ENCODE measurements at regions of chr5 and their contacts with region 1.

Region 1: DNA sequence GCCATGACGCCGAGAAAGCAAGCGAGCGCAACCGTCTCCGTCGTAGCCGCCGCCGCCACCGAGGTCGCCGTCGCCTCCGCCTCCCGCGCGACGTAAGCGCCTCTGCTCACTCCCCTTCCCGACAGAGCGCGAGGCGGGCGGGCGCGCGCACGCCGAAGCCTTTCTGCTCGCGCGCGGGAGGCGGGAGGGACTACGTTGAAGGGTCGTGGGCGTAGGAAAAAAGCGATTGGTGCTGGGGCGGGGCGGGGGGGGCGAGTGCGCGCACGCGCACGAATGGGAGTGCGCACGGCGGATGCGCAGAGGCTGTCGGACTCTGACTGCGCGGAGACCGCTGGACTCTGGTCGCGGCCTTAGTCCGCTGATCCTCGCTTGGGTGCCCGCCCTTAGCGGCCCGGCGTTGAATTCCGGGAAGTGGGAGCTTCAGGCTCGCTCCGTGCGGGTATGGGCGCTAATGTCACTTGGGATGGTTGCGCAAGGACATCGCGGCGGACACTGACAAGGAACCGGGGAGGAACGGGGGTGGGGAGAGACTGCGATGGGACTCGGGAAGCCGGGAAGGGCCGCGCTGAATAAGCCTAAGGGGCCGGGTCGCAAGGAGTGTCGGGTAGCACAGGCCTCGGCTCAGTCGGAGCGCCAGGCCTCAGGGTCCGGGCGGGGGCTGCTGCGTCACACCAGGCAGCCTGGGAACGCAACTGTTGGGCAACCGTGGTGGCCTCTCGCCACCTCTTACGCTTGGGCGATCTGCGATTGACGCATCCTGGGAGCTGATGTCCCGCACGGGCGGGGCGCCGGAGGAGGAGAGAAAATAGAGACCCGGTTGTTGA is at the start of gene CHD1:
- DNase-seq: peak; percentile 94 to 99 (median 98)
- H3K4me3 ChIP-seq: peak within 1 kb of the TSS; percentile 48 to 84
- H3K4me3 Mint-ChIP-seq: peak within 1 kb of the TSS; percentile 93 to 99 (median 98)
- H3K27ac ChIP-seq: peak within 1 kb of the TSS; percentile 100
- H3K27ac Mint-ChIP-seq: peak within 1 kb of the TSS; percentile 99 to 100 (median 100)
- H3K4me1 ChIP-seq: peaks cover 72% of the 10 kb centered on the region
- H3K4me1 Mint-ChIP-seq: peaks cover 45 to 90% (median 55%) of the 10 kb centered on the region in 4 donors
- H3K27me3 ChIP-seq: no peaks in the 10 kb centered on the region
- H3K27me3 Mint-ChIP-seq: no peaks in the 10 kb centered on the region
- total RNA-seq, gene CHD1: 91.2 to 93.9 TPM

Region 2: GRCh38 chr5:98905857-98906690 is 23.0 kb before region 1 on chr5:
- CTCF ChIA-PET with region 1: interaction called, 7 read pairs
- POLR2A ChIA-PET with region 1: interaction called, 130 read pairs
- intact Hi-C with region 1: loop called (anchors 1 kb)
- DNase-seq: peak in 4 of 5 donors; percentile 63 to 69 (median 66)
- H3K4me3 ChIP-seq: no peak overlapping the region
- H3K4me3 Mint-ChIP-seq: peak overlapping the region in 2 of 8 donors; percentile 3 to 11
- H3K27ac ChIP-seq: no peak overlapping the region
- H3K27ac Mint-ChIP-seq: peak overlapping the region in 6 of 7 donors; percentile 1 to 54 (median 10)
- H3K4me1 ChIP-seq: peaks cover 48% of the 10 kb centered on the region
- H3K4me1 Mint-ChIP-seq: peaks cover 33 to 58% (median 44%) of the 10 kb centered on the region in 4 donors
- H3K27me3 ChIP-seq: no peaks in the 10 kb centered on the region
- H3K27me3 Mint-ChIP-seq: no peaks in the 10 kb centered on the region

Region 3: GRCh38 chr5:98954392-98955028 is 25.4 kb after region 1 on chr5:
- CTCF ChIA-PET with region 1: no interaction called
- POLR2A ChIA-PET with region 1: interaction called, 10 read pairs
- intact Hi-C with region 1: no loop called
- DNase-seq: no peak
- H3K4me3 ChIP-seq: no peak overlapping the region
- H3K4me3 Mint-ChIP-seq: no peak overlapping the region
- H3K27ac ChIP-seq: no peak overlapping the region
- H3K27ac Mint-ChIP-seq: peak overlapping the region in 2 of 7 donors; percentile 19 to 65
- H3K4me1 ChIP-seq: no peaks in the 10 kb centered on the region
- H3K4me1 Mint-ChIP-seq: no peaks in the 10 kb centered on the region
- H3K27me3 ChIP-seq: no peaks in the 10 kb centered on the region
- H3K27me3 Mint-ChIP-seq: no peaks in the 10 kb centered on the region

Region 4: GRCh38 chr5:99037668-99038067 is 108.6 kb after region 1 on chr5:
- CTCF ChIA-PET with region 1: interaction called, 8 read pairs
- POLR2A ChIA-PET with region 1: interaction called, 144 read pairs
- intact Hi-C with region 1: loop called (anchors 1 kb)
- DNase-seq: peak; percentile 78 to 85 (median 81)
- H3K4me3 ChIP-seq: peak overlapping the region; percentile 3 to 52
- H3K4me3 Mint-ChIP-seq: peak overlapping the region; percentile 34 to 83 (median 64)
- H3K27ac ChIP-seq: peak overlapping the region; percentile 48
- H3K27ac Mint-ChIP-seq: peak overlapping the region; percentile 83 to 93 (median 89)
- H3K4me1 ChIP-seq: peaks cover 62% of the 10 kb centered on the region
- H3K4me1 Mint-ChIP-seq: peaks cover 48 to 82% (median 61%) of the 10 kb centered on the region in 4 donors
- H3K27me3 ChIP-seq: no peaks in the 10 kb centered on the region
- H3K27me3 Mint-ChIP-seq: no peaks in the 10 kb centered on the region

Region 5: GRCh38 chr5:99060306-99061261 is 131.5 kb after region 1 on chr5:
- CTCF ChIA-PET with region 1: interaction called, 26 read pairs
- POLR2A ChIA-PET with region 1: interaction called, 69 read pairs
- intact Hi-C with region 1: loop called (anchors 1 kb)
- DNase-seq: peak; percentile 77 to 84 (median 82)
- H3K4me3 ChIP-seq: no peak overlapping the region
- H3K4me3 Mint-ChIP-seq: peak overlapping the region in 5 of 8 donors; percentile 22 to 54 (median 40)
- H3K27ac ChIP-seq: no peak overlapping the region
- H3K27ac Mint-ChIP-seq: peak overlapping the region in 2 of 7 donors; percentile 53 to 71
- H3K4me1 ChIP-seq: no peaks in the 10 kb centered on the region
- H3K4me1 Mint-ChIP-seq: peaks cover 2 to 19% (median 11%) of the 10 kb centered on the region in 4 donors
- H3K27me3 ChIP-seq: no peaks in the 10 kb centered on the region
- H3K27me3 Mint-ChIP-seq: peaks cover 0 to 2% of the 10 kb centered on the region in 2 donors